Activated T-helper 1 cell treated with anti-CD3 and anti-CD28 coated beads, Interleukin-12 subunit alpha, Interleukin-12 subunit beta, Interleukin-2, Interleukin-4 antibody, amounts not matched to agents 30 ng/mL and 10 ng/mL and 1 ng/mL, durations not matched to agents 14 hours and 24 hours and 36 hours (primary cell): ENCODE measurements at regions of chr7 and their contacts with region 1.

Region 1: GRCh38 chr7:48035301-48035966 is at the start of gene C7orf57:
- DNase-seq: peak; percentile 87
- H3K4me3 Mint-ChIP-seq: peak within 1 kb of the TSS; percentile 81
- H3K27ac Mint-ChIP-seq: peak within 1 kb of the TSS; percentile 72
- H3K4me1 Mint-ChIP-seq: peaks cover 11% of the 10 kb centered on the region
- H3K27me3 Mint-ChIP-seq: peaks cover 53% of the 10 kb centered on the region
- total RNA-seq, gene C7orf57: 0.10 and 0.31 TPM in 2 replicates

Region 2: DNA sequence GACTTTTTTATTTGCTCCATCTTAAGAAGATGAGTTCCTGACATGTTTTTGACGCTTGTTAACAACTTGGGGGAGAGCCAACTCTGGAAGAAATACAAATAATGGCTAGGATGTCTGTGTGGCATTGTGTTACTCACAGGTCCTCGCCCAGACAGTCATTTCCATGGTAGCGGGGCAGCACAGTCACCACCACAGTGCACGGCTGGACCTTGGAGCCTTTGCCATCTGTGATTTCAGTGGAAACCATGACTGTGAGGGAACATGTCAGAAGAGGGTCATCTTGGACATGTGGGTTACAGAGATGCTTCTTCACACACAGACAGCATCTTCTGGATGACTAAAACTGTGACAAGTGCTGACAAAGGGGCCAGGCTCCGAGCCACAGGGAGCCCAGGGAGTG is 161.7 kb before region 1 on chr7:
- intact Hi-C with region 1: no loop called
- DNase-seq: no peak
- H3K4me3 Mint-ChIP-seq: no peak overlapping the region
- H3K27ac Mint-ChIP-seq: no peak overlapping the region
- H3K4me1 Mint-ChIP-seq: peaks cover 6% of the 10 kb centered on the region
- H3K27me3 Mint-ChIP-seq: peaks cover 9% of the 10 kb centered on the region

Region 3: GRCh38 chr7:47979145-47979831 is 56.1 kb before region 1 on chr7 and contains the start of gene HUS1:
- intact Hi-C with region 1: loop called (anchors 1 kb)
- DNase-seq: peak; percentile 88
- H3K4me3 Mint-ChIP-seq: peak within 1 kb of the TSS; percentile 90
- H3K27ac Mint-ChIP-seq: peak within 1 kb of the TSS; percentile 96
- H3K4me1 Mint-ChIP-seq: peaks cover 24% of the 10 kb centered on the region
- H3K27me3 Mint-ChIP-seq: peaks cover 5% of the 10 kb centered on the region
- total RNA-seq, gene HUS1: 34.4 and 36.4 TPM in 2 replicates

Region 4: DNA sequence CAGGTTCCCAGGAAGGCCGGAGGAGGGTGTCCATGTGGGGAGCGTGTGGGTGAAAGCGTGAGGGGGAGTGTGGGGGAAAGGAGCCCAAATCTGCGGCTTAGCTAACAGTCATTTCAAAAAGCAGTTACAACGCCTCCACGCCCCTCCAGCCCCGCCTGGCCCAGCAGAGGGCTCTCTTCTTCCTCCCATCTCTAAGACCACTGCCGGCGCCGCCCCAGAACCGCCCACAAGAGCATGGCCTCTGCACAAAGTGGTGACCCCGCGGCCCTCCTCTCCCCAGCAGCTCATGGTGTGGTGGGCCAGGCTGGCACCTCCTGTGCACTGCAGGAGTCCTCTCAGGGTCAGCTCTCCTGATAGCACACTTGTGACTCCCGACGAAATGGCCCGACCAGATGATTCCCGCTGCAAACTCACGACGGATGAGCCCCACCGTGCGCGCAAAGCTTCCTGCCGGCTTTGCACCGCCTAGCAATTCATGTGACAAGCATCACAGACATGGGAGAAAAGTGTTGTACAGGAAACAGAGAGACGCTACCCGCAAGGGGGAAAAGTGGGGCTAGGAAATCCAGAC is 43.6 kb before region 1 on chr7:
- intact Hi-C with region 1: loop called (anchors 1 kb)
- DNase-seq: peak; percentile 80
- H3K4me3 Mint-ChIP-seq: peak overlapping the region; percentile 80
- H3K27ac Mint-ChIP-seq: peak overlapping the region; percentile 80
- H3K4me1 Mint-ChIP-seq: peaks cover 17% of the 10 kb centered on the region
- H3K27me3 Mint-ChIP-seq: peaks cover 6% of the 10 kb centered on the region

Region 5: DNA sequence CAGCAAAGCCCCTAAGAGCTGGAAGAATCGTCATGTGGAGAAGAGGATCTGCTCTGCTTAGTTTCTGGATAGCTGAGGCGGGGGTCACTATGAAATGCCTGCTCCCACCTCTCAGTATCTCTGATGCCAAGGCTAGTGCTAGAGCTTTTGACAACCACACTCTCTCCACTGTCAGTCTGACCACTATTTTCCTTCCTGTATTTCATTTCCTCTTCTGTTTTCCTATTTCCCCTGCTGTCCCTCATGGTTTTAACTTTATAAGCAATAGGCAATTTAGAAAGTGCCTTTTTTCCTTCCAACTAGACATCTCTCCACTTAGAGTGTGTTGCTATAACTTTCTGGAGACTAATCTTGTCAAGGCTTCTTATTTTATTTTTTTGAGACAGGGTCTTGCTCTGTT is 23.6 kb after region 1 on chr7:
- intact Hi-C with region 1: no loop called
- DNase-seq: no peak
- H3K4me3 Mint-ChIP-seq: no peak overlapping the region
- H3K27ac Mint-ChIP-seq: no peak overlapping the region
- H3K4me1 Mint-ChIP-seq: no peaks in the 10 kb centered on the region
- H3K27me3 Mint-ChIP-seq: peaks cover 25% of the 10 kb centered on the region

Region 6: DNA sequence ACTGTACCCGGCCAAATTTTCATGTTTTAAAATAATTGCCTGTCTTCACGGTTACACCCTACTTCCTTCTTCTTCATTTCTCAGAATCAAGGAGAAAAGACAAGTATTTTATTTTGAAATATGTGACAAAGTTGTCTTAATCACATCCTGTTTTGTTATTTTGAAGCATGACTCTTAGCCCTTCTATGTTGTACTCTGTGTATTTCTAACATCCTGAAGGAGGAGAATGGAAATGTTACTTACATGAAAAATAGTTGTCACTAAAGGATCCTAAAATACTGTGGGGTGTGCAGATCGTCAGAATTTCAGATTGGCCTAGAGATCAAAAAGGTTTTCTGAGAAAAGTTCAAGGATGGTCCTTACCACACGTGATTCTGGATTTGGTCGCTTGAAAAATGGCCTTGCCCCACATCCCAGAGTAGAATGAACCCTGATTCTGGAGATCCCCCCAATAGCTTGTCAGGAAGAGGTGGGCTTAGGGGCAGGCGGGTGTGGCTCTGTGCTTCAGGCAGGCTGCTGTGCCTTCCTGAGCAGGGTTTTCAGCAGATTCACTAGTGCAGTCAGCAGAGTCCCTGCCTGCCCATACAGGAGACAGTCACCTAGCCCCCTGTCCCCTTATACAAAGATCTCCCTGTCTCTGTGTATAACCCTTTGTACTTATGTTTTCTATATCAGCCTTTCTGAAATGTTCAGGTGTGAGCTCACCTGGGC is 62.2 kb after region 1 on chr7:
- intact Hi-C with region 1: loop called (anchors 2 kb)
- DNase-seq: peak; percentile 39
- H3K4me3 Mint-ChIP-seq: peak overlapping the region; percentile 42
- H3K27ac Mint-ChIP-seq: peak overlapping the region; percentile 92
- H3K4me1 Mint-ChIP-seq: peaks cover 75% of the 10 kb centered on the region
- H3K27me3 Mint-ChIP-seq: no peaks in the 10 kb centered on the region